Activated T-helper 1 cell treated with anti-CD3 and anti-CD28 coated beads, Interleukin-12 subunit alpha, Interleukin-12 subunit beta, Interleukin-2, Interleukin-4 antibody, amounts not matched to agents 30 ng/mL and 10 ng/mL and 1 ng/mL, durations not matched to agents 14 hours and 24 hours and 36 hours (primary cell): ENCODE measurements at regions of chr1 and their contacts with region 1.

Region 1: DNA sequence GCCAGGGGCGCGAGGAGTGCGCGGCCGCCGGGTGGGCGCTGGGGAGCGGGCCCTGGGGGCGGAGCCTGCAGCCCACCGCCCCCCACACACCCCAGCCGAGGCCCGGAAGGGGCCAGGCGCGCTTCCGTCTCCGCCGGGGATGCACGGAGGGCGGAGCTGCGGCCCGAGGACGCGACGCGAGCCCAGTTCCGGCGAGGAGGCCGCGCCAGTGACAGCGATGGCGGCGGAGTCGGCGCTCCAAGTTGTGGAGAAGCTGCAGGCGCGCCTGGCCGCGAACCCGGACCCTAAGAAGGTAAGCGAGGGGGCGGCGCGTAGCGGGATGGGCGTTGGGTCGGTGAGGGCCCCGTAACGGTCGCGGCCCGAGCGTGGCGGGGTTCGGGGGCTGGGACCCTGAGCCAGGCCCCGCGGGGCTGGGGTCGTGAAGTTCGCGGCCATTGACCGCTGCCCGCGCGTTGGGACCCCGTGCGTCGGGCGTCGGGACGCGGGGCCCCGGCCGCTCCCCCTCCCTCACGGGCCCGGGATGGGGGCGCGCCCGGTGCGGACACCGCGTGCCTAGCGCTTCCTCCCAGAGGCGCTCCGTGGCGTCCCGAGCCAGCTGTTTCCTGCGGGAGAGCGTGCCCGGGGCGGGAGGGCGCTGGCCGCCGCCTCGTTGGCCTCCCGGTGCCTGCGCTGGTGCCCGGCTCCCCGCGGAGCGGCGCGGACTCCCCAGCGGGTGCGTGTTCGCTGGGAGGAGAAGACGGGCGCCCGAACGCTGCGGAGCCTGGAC is at the start of gene ELOA:
- DNase-seq: peak; percentile 77
- H3K4me3 Mint-ChIP-seq: peak within 1 kb of the TSS; percentile 95
- H3K27ac Mint-ChIP-seq: peak within 1 kb of the TSS; percentile 88
- H3K4me1 Mint-ChIP-seq: peaks cover 47% of the 10 kb centered on the region
- H3K27me3 Mint-ChIP-seq: peaks cover 2% of the 10 kb centered on the region
- total RNA-seq, gene ELOA: 54.5 and 55.2 TPM in 2 replicates

Region 2: DNA sequence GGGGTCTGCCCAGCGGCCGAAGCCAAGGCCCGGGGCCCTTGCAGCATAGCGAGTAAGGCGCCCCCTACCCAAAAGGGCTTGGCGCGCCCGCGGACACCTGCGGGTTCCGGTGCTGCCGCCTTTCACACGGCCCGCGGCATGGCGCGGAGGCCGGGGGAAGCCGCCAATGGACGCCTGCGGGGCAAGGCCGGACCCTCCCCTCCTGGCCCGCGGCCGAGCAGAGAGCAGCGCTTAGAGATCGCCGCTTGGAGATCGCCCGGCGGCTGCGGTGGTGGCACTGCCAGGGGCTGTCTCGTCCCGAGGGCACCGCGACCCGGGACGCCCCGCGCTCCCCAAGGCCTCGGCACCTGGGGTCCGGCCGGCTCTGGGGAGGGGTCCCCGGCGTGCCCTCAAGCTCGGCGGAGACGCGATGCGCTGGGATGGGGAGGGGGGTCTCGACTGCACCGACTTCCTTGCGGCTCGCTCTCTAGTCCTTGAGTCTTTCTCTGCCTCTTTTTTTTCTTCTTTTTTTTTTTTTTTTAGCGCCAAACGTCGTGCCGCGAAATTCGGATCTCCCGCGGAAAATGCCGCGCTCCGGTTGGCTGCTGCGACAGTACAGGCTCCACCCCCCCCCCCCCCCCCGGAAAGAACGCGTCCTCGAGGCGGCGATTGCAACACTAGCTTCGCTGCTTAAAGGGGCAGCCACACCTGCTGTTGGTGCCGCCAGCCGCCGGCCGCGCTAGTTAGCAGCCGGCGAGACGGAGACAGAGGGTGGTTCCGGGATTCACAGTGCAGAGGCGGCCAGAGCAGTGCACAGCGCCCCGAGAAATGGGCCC is 212.5 kb before region 1 on chr1 and contains the start of gene E2F2:
- intact Hi-C with region 1: loop called (anchors 5 kb)
- DNase-seq: peak; percentile 76
- H3K4me3 Mint-ChIP-seq: peak within 1 kb of the TSS; percentile 96
- H3K27ac Mint-ChIP-seq: peak within 1 kb of the TSS; percentile 97
- H3K4me1 Mint-ChIP-seq: peaks cover 84% of the 10 kb centered on the region
- H3K27me3 Mint-ChIP-seq: no peaks in the 10 kb centered on the region
- total RNA-seq, gene E2F2: 32.0 and 33.5 TPM in 2 replicates

Region 3: DNA sequence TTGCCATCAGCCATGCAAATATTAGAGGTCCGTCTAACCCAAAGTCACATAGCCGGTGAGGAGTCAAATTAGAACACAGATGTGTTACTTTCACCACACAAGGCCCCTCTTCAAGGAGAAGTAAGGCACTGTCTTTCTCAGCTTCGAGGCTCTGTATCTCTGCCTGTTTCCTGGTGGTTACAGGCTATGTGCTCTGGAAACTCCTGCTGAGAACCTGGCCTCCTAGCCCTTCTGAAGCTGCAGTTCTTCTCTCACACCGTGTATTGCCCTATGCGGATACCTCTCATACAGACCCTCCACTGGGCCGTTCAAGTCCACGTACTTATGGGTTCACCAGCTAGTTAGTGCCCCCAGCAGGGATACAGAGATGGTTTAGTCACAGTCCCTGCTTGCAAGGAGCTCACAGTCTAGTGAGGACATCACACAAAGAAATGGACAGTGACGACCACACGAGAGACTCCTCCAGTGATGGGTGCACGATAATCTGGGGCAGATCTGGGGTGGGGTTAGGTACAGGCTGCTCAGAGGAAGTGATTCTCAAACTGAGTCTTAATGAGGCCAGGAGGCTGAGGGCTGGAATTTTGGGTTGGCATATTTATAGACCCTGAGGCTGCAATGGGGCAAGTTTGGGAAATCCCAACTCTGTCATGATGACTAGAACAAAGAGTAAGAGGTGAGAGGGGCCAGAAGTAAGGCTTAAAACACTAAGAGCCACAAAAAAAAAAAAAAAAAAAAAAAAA is 23.0 kb before region 1 on chr1:
- intact Hi-C with region 1: loop called (anchors 1 kb)
- DNase-seq: peak; percentile 8
- H3K4me3 Mint-ChIP-seq: peak overlapping the region; percentile 5
- H3K27ac Mint-ChIP-seq: peak overlapping the region; percentile 67
- H3K4me1 Mint-ChIP-seq: peaks cover 32% of the 10 kb centered on the region
- H3K27me3 Mint-ChIP-seq: no peaks in the 10 kb centered on the region

Region 4: DNA sequence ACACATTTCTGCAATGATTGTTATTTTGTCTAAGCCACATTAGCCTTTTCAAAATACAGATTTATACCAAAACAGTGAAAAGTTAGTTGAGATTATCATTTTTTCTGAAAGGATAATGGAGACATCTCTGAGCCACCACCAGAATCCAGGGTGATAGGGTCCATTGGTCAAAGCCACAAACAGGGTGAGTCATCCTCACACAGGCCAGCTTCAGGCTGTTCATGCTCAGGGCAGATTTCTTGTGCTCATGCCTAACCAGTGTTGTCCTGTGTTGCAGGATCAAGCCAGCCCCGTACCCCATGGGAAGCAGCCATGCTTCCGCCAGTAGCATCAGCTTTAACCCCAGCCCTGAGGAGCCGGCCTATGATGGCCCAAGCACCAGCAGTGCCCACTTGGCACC is 13.2 kb after region 1 on chr1:
- intact Hi-C with region 1: no loop called
- DNase-seq: no peak
- H3K4me3 Mint-ChIP-seq: no peak overlapping the region
- H3K27ac Mint-ChIP-seq: no peak overlapping the region
- H3K4me1 Mint-ChIP-seq: no peaks in the 10 kb centered on the region
- H3K27me3 Mint-ChIP-seq: no peaks in the 10 kb centered on the region